ENCODE measurements at regions of chr1 and their contacts with region 1.

Region 1: GRCh38 chr1:235843461-235843961 is 23.2 kb downstream of the LYST start:
- DNase-seq: no peak
- ATAC-seq: peak; percentile 73
- H3K4me3 Mint-ChIP-seq: no peak overlapping the region
- H3K27ac Mint-ChIP-seq: no peak overlapping the region
- H3K4me1 Mint-ChIP-seq: peaks cover 45% of the 10 kb centered on the region
- H3K27me3 Mint-ChIP-seq: no peaks in the 10 kb centered on the region

Region 2: DNA sequence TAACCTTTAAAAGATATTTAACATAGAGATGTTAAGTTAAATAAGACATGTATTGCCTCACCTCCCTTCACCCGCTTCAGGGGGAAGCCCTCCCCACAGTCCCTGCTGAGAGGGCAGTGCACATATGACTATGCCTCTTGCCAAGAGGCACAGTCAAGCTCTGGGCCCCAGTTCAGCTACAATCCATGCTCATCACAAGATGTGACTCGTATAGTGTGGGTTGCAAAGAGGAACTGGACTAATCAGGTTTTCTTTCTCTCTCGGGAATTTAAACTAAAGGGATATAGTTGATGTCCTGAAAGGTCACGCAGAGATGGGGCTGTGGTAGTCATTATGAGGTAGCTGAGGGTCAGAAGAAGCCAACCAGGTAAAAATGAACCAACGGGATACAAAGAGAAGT is 12.4 kb before region 1 on chr1:
- CTCF ChIA-PET with region 1: interaction called, 64 read pairs
- POLR2A ChIA-PET with region 1: no interaction called
- intact Hi-C with region 1: no loop called
- DNase-seq: peak; percentile 77
- ATAC-seq: peak; percentile 100
- H3K4me3 Mint-ChIP-seq: no peak overlapping the region
- H3K27ac Mint-ChIP-seq: no peak overlapping the region
- H3K4me1 Mint-ChIP-seq: peaks cover 9% of the 10 kb centered on the region
- H3K27me3 Mint-ChIP-seq: no peaks in the 10 kb centered on the region

Region 3: GRCh38 chr1:235892734-235893413 is 49.4 kb after region 1 on chr1:
- CTCF ChIA-PET with region 1: no interaction called
- POLR2A ChIA-PET with region 1: no interaction called
- intact Hi-C with region 1: no loop called
- DNase-seq: no peak
- ATAC-seq: no peak
- H3K4me3 Mint-ChIP-seq: no peak overlapping the region
- H3K27ac Mint-ChIP-seq: no peak overlapping the region
- H3K4me1 Mint-ChIP-seq: peaks cover 15% of the 10 kb centered on the region
- H3K27me3 Mint-ChIP-seq: no peaks in the 10 kb centered on the region